ENCODE measurements at regions of chr14 and their contacts with region 1.

Region 1: DNA sequence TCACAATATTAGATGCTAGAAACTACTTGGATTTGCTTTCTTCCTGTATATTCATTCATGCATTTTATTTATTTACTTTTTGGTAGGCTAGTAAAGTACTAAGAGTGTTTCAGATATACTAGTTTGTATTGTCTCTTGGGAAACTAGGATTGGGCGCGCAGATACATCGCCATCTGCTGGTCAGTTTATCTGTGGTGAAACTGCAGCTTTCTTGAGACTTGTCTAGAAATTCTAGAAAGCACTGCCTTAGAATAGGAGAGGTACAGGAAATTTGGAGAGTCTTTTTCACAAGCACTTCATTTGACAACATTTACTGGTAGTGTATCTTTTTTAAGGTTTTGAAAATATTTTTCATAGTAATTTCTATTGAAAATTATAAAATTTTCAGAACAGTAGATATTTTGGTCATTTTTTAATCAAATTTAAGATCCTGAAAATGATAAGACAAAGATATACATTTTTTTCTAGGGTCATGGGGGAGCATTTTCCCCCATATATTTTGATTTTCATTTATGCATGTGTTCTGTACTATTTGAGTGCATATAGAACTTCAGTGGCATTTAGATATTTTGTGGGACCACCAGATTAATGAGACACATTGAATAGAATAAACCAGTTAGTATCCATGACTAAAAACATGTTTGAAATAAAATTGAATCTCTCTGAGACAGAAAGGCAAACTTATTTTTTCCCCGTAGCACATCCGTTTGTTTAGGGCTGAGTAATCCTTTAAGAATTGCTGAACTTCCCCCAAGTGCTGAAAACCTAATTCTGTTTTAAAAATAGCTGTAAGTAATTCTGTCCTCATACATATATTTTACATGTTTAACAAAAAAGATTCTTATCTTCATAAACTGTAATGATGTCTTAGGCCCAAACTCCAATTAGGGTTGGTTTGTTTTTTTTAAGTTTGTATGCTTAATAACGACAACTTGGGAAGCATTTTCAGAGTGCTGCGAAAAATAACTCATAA is 44.5 kb downstream of the SLC38A6 start:
- DNase-seq: peak in 8 of 9 experiments; percentile 9 to 74 (median 50)
- ATAC-seq: no peak
- H3K4me3 ChIP-seq: no peak overlapping the region
- H3K4me3 Mint-ChIP-seq: no peak overlapping the region
- H3K27ac ChIP-seq: no peak overlapping the region
- H3K27ac Mint-ChIP-seq: no peak overlapping the region
- H3K4me1 ChIP-seq: no peaks in the 10 kb centered on the region
- H3K4me1 Mint-ChIP-seq: peaks cover 2% of the 10 kb centered on the region
- H3K27me3 ChIP-seq: no peaks in the 10 kb centered on the region
- H3K27me3 Mint-ChIP-seq: no peaks in the 10 kb centered on the region
- CTCF ChIP-seq: peak; percentile 84

Region 2: DNA sequence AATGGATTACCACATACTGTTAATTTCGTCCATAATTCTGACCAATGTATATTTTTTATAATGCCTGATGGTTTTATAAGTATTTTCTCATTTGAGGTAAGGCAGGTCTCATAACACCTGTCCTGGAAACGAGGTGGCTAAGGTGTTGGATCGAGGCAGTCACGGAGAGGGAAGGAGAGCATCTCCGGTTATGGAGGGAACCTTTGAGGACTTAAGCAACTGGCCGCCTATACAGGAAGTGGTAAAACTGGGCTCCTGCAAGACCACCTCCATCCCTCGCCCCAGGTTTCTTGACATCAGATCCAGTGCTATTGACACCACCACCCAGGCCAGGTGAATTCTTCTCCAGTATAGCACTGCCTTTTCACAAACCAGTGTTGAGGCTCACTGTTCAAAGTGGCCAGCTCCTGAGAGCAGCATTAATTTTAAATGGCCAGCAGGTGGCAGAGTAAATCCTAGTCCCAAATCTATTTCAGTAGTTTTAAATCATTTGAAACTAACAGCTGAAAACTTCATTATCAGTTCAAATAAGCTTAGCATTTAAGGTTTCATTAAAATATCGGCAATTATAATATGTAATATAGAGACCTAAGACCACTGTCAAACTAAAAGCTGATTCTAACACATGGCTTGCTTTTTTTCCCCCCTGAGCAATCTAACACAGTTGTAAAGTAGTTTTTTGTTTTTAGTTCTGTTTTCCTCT is 675.7 kb before region 1 on chr14:
- CTCF ChIA-PET with region 1: no interaction called
- POLR2A ChIA-PET with region 1: no interaction called
- intact Hi-C with region 1: loop called (anchors 1 to 5 kb)
- DNase-seq: peak in 4 of 9 experiments; percentile 19 to 56 (median 40)
- ATAC-seq: peak; percentile 57
- H3K4me3 ChIP-seq: no peak overlapping the region
- H3K4me3 Mint-ChIP-seq: no peak overlapping the region
- H3K27ac ChIP-seq: no peak overlapping the region
- H3K27ac Mint-ChIP-seq: no peak overlapping the region
- H3K4me1 ChIP-seq: no peaks in the 10 kb centered on the region
- H3K4me1 Mint-ChIP-seq: peaks cover 4% of the 10 kb centered on the region
- H3K27me3 ChIP-seq: no peaks in the 10 kb centered on the region
- H3K27me3 Mint-ChIP-seq: peaks cover 8% of the 10 kb centered on the region
- CTCF ChIP-seq: peak; percentile 42

Region 3: GRCh38 chr14:60622917-60623257 is 402.6 kb before region 1 on chr14:
- CTCF ChIA-PET with region 1: interaction called, 23 read pairs
- POLR2A ChIA-PET with region 1: no interaction called
- intact Hi-C with region 1: loop called (anchors 1 kb)
- DNase-seq: no peak
- ATAC-seq: no peak
- H3K4me3 ChIP-seq: no peak overlapping the region
- H3K4me3 Mint-ChIP-seq: no peak overlapping the region
- H3K27ac ChIP-seq: no peak overlapping the region
- H3K27ac Mint-ChIP-seq: no peak overlapping the region
- H3K4me1 ChIP-seq: no peaks in the 10 kb centered on the region
- H3K4me1 Mint-ChIP-seq: no peaks in the 10 kb centered on the region
- H3K27me3 ChIP-seq: no peaks in the 10 kb centered on the region
- H3K27me3 Mint-ChIP-seq: peaks cover 21% of the 10 kb centered on the region
- CTCF ChIP-seq: no peak

Measured in CD8-positive, alpha-beta T cell (primary cell).